ENCODE measurements at regions of chr10 and their contacts with region 1.

Region 1: DNA sequence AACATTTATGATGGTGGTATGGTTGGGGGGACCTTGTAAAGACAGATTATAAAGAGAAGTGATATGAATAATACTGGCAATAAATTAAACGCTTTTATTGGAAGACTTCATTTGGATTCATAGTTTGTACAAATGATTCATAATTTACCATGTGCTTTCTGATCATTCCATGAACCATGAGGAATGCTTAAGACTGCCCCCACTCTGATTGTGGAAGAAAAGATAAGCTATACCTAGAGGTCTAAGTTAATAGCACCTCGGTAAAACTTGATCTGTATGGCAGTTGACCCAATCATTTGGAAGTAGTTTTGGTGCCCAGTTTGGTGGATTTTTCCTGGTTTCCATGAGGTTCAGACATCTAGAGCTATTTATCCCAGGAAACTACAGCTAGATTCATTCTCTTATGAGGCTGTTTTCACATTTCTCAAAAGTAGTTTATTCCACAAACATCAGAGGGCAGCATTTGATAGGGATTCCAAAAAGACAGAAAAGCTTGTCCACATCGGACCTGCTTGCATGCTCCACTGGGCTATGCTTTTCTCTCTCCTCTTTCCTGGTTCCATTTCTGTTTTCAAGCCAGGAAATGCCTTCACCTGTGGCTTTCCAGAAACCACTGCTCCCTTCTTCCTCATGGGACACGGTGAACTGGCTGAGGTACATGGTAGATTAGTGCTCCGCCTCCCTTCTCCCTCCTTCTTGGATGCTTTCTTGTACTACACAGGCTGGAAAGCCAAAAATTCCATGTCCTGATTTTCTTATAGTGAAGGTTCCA is 29.2 kb downstream of the TFAM start:
- DNase-seq: peak; percentile 80
- ATAC-seq: peak; percentile 91
- H3K4me3 ChIP-seq: no peak overlapping the region
- H3K27ac ChIP-seq: no peak overlapping the region
- H3K4me1 ChIP-seq: peaks cover 5% of the 10 kb centered on the region
- H3K27me3 ChIP-seq: no peaks in the 10 kb centered on the region
- CTCF ChIP-seq: peak; percentile 78
- POLR2A ChIP-seq: 0 out of 2 replicates have a peak, but pooled peaks have one; percentile 32
- RAD21 ChIP-seq: peak; percentile 93

Region 2: GRCh38 chr10:58177362-58177947 is 237.0 kb before region 1 on chr10:
- CTCF ChIA-PET with region 1: no interaction called
- POLR2A ChIA-PET with region 1: no interaction called
- dilution Hi-C with region 1: no loop called
- in situ Hi-C with region 1: no loop called
- intact Hi-C with region 1: no loop called
- DNase-seq: peak; percentile 47
- ATAC-seq: no peak; the same call in 1 of the 2 replicates
- H3K4me3 ChIP-seq: no peak overlapping the region
- H3K27ac ChIP-seq: no peak overlapping the region
- H3K4me1 ChIP-seq: no peaks in the 10 kb centered on the region
- H3K27me3 ChIP-seq: no peaks in the 10 kb centered on the region
- CTCF ChIP-seq: peak; percentile 74
- POLR2A ChIP-seq: no peak
- RAD21 ChIP-seq: peak; percentile 70

Region 3: DNA sequence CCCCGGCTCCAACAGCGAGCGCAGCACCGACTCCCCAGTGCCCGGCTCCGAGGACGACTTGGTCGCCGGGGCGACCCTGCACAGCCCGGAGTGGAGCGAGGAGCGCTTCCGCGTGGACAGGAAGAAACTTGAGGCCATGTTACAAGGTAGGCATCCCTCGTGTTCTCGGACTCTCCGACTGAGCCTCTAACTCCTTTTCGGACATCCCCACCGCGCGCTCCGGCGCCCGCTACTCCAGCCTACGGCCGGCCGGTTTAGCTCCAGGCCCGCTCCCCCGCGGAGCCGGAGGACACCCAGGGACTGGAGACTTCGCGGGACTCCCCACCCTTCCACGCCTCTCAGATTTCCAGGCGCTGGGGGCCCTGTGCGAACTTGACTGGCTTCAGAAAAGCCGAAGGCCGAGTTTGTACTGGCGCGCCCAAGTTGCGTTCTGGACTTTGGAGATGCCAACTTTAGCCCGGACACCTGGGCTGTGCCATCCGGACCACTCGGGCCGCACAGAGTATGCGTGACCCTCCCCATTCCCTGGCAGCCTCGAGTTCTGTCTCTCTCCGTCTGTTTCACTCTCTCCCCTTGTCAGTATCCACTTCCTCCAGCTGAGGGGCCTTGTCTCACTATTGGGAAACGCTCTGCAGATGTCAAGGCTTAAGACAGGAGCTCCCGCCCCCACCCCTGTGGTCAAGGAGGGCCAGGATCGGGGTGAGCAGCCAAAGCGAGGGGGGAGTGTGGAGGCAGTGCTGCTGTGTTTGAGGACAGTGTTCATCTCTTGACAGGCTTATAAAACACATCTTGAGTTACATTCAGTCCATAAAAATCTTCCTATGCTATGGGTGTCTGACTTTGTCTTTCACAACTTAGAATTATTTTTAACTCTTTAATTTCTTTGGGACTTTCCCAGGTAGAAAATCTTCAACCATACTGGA is 99.0 kb after region 1 on chr10:
- CTCF ChIA-PET with region 1: interaction called, 3 read pairs
- POLR2A ChIA-PET with region 1: no interaction called
- dilution Hi-C with region 1: no loop called
- in situ Hi-C with region 1: no loop called
- intact Hi-C with region 1: loop called (anchors 1 kb)
- DNase-seq: peak; percentile 84
- ATAC-seq: peak; percentile 35
- H3K4me3 ChIP-seq: peak overlapping the region; percentile 72
- H3K27ac ChIP-seq: peak overlapping the region; percentile 77
- H3K4me1 ChIP-seq: peaks cover 8% of the 10 kb centered on the region
- H3K27me3 ChIP-seq: no peaks in the 10 kb centered on the region
- CTCF ChIP-seq: no peak
- POLR2A ChIP-seq: peak; percentile 23; the same call in 1 of the 2 replicates
- RAD21 ChIP-seq: peak; percentile 8; the same call in 1 of the 2 replicates

Region 4: DNA sequence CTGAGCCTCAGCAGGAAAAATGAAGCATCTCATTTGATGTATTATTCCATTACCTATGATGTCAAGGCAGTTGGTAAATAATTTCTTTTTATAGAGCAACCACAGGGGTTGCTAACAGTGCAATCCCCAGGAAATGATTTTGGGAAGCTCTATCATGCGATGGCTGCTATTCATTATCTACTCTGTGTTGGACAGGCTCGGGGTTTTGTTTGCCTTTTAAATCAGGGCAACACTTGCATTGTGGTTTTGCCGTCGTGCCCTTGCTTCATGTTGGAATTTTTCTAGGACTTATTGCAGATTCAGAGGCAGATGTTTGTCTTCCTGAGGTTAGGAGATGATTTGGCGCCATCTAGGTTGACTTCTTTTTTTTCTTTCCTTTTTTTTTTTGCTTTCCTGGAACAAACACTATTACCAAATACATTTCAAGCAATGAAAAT is 226.7 kb after region 1 on chr10:
- CTCF ChIA-PET with region 1: interaction called, 4 read pairs
- POLR2A ChIA-PET with region 1: no interaction called
- dilution Hi-C with region 1: no loop called
- in situ Hi-C with region 1: no loop called
- intact Hi-C with region 1: loop called (anchors 5 kb)
- DNase-seq: peak; percentile 92
- ATAC-seq: peak; percentile 76
- H3K4me3 ChIP-seq: no peak overlapping the region
- H3K27ac ChIP-seq: no peak overlapping the region
- H3K4me1 ChIP-seq: peaks cover 10% of the 10 kb centered on the region; the same call in 1 of the 2 replicates
- H3K27me3 ChIP-seq: no peaks in the 10 kb centered on the region
- CTCF ChIP-seq: peak; percentile 46
- POLR2A ChIP-seq: no peak
- RAD21 ChIP-seq: peak; percentile 42; the same call in 1 of the 2 replicates

Region 5: GRCh38 chr10:58952747-58953466 is 538.5 kb after region 1 on chr10:
- CTCF ChIA-PET with region 1: no interaction called
- POLR2A ChIA-PET with region 1: no interaction called
- dilution Hi-C with region 1: no loop called
- in situ Hi-C with region 1: no loop called
- intact Hi-C with region 1: loop called (anchors 2 kb)
- DNase-seq: peak; percentile 42
- ATAC-seq: peak; percentile 84
- H3K4me3 ChIP-seq: no peak overlapping the region
- H3K27ac ChIP-seq: no peak overlapping the region
- H3K4me1 ChIP-seq: no peaks in the 10 kb centered on the region
- H3K27me3 ChIP-seq: peaks cover 12% of the 10 kb centered on the region
- CTCF ChIP-seq: peak; percentile 77
- POLR2A ChIP-seq: no peak
- RAD21 ChIP-seq: peak; percentile 72

Region 6: DNA sequence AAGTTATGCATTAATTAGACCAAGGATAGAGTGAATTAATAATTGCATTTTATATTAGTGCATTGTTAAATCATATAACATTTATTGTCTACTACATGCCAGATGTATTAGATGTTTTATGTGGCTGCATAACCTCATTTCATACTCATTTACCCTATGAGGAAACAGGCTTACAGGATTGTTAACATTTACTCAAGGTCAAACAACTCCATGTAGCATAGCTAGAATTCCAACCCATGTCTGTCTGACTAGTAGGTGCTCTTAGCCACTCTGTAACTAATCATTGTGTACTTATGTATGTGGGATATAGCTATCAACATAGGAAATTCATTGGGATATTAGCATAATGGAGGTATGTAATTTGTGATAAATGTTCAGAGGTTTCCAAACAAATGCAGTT is 808.3 kb after region 1 on chr10:
- CTCF ChIA-PET with region 1: no interaction called
- POLR2A ChIA-PET with region 1: no interaction called
- dilution Hi-C with region 1: no loop called
- in situ Hi-C with region 1: loop called (anchors 25 kb)
- intact Hi-C with region 1: no loop called
- DNase-seq: peak; percentile 5
- ATAC-seq: no peak
- H3K4me3 ChIP-seq: no peak overlapping the region
- H3K27ac ChIP-seq: no peak overlapping the region
- H3K4me1 ChIP-seq: no peaks in the 10 kb centered on the region
- H3K27me3 ChIP-seq: no peaks in the 10 kb centered on the region
- CTCF ChIP-seq: no peak
- POLR2A ChIP-seq: no peak
- RAD21 ChIP-seq: no peak

Measured in IMR-90 (cell line).